A549 (cell line): ENCODE measurements at regions of chr12 and their contacts with region 1.

Region 1: DNA sequence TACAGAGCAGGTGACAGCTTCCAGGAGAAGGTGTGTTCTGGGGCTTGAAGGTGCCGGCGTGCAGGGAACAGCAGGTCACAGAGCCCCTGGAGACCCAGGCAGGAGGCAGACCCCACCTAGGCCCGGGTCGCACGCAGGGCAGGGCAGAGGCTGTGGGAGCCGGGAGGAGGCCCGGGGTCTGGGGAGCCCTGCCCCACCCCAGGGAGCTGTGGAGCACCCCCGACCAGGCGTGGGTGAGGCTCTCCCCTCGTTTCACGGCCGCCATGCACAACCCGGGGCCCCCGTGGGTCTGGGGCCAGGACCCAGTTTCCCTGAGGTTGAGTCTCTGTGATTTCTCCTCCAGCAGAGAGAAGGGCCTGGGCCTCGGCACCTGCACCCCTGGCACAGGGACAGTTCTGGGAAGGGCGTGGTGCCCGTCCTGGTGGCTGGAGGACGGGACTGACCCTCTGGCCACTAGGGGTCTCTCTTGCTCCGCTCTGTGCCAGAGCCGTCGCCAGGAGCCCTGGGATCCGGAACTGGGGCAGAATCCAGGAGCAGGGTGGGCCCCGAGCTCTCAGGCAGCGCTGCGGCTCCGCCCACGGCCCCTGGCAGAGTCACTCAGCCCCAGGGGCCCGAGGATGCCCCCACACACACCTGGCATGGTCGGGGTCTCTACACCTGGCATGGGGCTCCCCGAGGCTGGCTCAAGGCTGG is 75.2 kb upstream of the FBRSL1 start:
- DNase-seq: peak; percentile 80 to 88
- ATAC-seq: peak; percentile 87 to 98
- H3K4me3 ChIP-seq: no peak overlapping the region
- H3K27ac ChIP-seq: peak overlapping the region; percentile 65 to 85; a peak in 5 of 6 replicates
- H3K4me1 ChIP-seq: peaks cover 12% of the 10 kb centered on the region; the same call in 2 of the 3 replicates
- CTCF ChIP-seq: peak; percentile 94
- EP300 ChIP-seq: no peak
- POLR2A ChIP-seq: no peak
- RAD21 ChIP-seq: peak; percentile 98 to 99

Region 2: DNA sequence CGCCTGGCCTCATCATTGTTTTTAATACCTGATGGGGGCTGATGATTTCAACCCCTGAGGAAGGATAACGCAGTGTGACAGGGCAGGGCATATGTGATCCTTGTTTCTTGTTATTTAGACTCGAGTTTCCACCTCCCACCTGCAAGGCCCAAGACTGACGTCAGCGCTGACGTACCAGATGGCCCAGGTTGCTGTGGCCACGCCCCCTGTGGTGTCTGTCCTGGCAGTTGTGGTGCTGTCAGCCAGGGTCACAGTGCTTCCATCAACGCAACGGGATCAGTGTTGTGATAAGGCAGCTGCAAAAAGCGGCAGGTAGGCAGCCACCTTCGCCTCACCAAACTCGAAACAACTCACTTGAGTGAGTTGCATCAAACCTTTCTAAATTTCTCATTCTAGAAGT is 289.0 kb before region 1 on chr12:
- CTCF ChIA-PET with region 1: interaction called, 11 read pairs
- POLR2A ChIA-PET with region 1: no interaction called
- DNase-seq: no peak
- ATAC-seq: no peak
- H3K4me3 ChIP-seq: no peak overlapping the region
- H3K27ac ChIP-seq: no peak overlapping the region
- H3K4me1 ChIP-seq: no peaks in the 10 kb centered on the region
- CTCF ChIP-seq: no peak
- EP300 ChIP-seq: no peak
- POLR2A ChIP-seq: no peak
- RAD21 ChIP-seq: no peak

Region 3: GRCh38 chr12:132178801-132179401 is 235.9 kb before region 1 on chr12:
- CTCF ChIA-PET with region 1: interaction called, 18 read pairs
- POLR2A ChIA-PET with region 1: no interaction called
- DNase-seq: peak in 1 of 2 experiments; percentile 58
- ATAC-seq: peak; percentile 27 to 61; a peak in 4 of 6 replicates
- H3K4me3 ChIP-seq: peak overlapping the region; percentile 22
- H3K27ac ChIP-seq: peak overlapping the region in 1 of 2 experiments; percentile 30; a peak in 3 of 6 replicates
- H3K4me1 ChIP-seq: peaks cover 9% of the 10 kb centered on the region; the same call in 2 of the 3 replicates
- CTCF ChIP-seq: no peak
- EP300 ChIP-seq: no peak
- POLR2A ChIP-seq: no peak
- RAD21 ChIP-seq: no peak

Region 4: GRCh38 chr12:132213359-132214160 is 201.2 kb before region 1 on chr12:
- CTCF ChIA-PET with region 1: no interaction called
- POLR2A ChIA-PET with region 1: no interaction called
- DNase-seq: no peak
- ATAC-seq: no peak
- H3K4me3 ChIP-seq: no peak overlapping the region
- H3K27ac ChIP-seq: no peak overlapping the region
- H3K4me1 ChIP-seq: no peaks in the 10 kb centered on the region
- CTCF ChIP-seq: no peak
- EP300 ChIP-seq: no peak
- POLR2A ChIP-seq: no peak
- RAD21 ChIP-seq: no peak

Region 5: GRCh38 chr12:132268674-132269073 is 146.1 kb before region 1 on chr12:
- CTCF ChIA-PET with region 1: no interaction called
- POLR2A ChIA-PET with region 1: no interaction called
- DNase-seq: no peak
- ATAC-seq: no peak
- H3K4me3 ChIP-seq: no peak overlapping the region
- H3K27ac ChIP-seq: no peak overlapping the region
- H3K4me1 ChIP-seq: no peaks in the 10 kb centered on the region
- CTCF ChIP-seq: no peak
- EP300 ChIP-seq: no peak
- POLR2A ChIP-seq: no peak
- RAD21 ChIP-seq: no peak

Region 6: GRCh38 chr12:132327351-132328171 is 87.2 kb before region 1 on chr12:
- CTCF ChIA-PET with region 1: interaction called, 17 read pairs
- POLR2A ChIA-PET with region 1: no interaction called
- DNase-seq: peak; percentile 42 to 48
- ATAC-seq: peak; percentile 70 to 76
- H3K4me3 ChIP-seq: peak overlapping the region; percentile 17; the same call in 2 of the 3 replicates
- H3K27ac ChIP-seq: peak overlapping the region; percentile 45 to 68; a peak in 4 of 6 replicates
- H3K4me1 ChIP-seq: peaks cover 32% of the 10 kb centered on the region
- CTCF ChIP-seq: no peak
- EP300 ChIP-seq: no peak
- POLR2A ChIP-seq: no peak
- RAD21 ChIP-seq: no peak

Region 7: DNA sequence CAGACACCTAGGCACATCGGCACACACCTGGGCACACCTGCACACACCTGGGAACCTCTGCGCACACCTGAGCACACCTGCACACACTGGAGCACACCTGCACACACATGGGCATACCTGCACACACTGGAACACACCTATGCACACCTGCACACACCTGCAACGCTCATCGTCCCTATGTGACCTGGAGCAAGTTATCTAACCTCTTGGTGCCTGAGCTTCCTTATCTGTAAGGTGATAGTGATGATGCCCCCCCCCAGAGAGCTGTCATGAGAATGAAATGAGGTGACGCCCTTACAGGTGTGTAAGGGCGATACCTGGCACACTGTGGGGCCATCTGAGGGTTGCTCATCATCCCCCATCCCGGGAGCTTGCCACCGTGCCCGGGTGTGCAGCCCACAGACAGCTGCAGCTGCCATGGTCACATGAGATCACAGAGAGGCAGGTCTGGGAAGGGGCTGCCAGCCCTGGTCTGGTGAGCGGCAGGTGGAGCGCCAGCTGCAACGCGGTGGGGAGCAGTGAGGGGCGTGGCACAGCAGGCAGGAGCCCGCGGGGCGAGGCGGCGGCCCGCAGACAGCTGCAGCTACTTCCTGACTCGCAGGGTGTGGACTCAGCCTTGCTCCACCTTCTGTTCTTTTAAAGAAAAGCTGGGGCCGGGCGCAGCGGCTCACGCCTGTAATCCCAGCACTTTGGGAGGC is 15.3 kb after region 1 on chr12:
- CTCF ChIA-PET with region 1: interaction called, 70 read pairs
- POLR2A ChIA-PET with region 1: no interaction called
- DNase-seq: peak; percentile 45 to 57
- ATAC-seq: peak; percentile 36 to 76; a peak in 4 of 6 replicates
- H3K4me3 ChIP-seq: 0 out of 3 replicates have a peak overlapping the region, but pooled peaks have one; percentile 18
- H3K27ac ChIP-seq: peak overlapping the region; percentile 30 to 58; a peak in 3 of 6 replicates
- H3K4me1 ChIP-seq: peaks cover 21% of the 10 kb centered on the region; the same call in 2 of the 3 replicates
- CTCF ChIP-seq: no peak
- EP300 ChIP-seq: no peak
- POLR2A ChIP-seq: no peak
- RAD21 ChIP-seq: no peak

Region 8: DNA sequence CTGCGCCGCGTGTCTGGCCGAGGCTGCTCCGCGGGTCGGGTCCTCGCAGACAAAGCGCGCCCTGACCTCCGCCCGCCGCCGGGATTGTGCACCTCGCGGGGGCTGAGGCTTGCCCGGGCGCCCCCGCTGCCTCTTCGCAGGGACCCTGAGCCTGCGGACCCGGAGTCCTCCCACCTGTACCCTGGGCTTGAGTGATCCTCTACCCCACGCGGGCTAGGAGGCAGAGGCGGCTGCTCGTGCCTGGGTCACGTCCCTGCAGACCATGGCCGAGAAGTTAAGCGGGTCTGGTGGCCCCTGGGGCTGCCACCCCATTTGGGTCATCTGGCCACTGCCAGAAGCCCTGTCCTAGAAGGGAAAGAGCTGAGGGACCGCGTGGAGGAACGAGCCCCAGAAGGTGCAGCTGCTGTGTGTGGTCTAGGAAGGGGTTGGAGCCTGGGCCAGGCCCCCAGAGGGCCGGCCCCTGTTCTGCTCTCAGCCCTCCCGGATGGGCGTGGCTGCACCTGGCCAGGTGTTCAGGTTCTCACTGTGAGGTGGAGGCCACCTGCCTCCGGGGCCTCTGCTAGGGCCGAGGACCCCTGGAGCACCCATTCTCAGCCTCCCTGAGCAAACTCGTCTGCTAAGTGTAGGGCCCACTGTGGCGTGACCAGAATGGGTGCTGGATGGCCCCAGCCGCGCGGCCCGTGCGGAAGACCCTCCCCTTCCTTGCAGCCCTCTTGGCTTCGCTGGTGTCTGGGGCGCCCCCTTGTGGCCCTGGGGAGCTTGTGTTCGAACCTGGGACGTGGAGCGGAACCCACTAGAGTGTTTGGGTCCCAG is 146.0 kb after region 1 on chr12:
- CTCF ChIA-PET with region 1: interaction called, 108 read pairs
- POLR2A ChIA-PET with region 1: no interaction called
- DNase-seq: peak; percentile 82 to 89
- ATAC-seq: peak; percentile 54 to 83
- H3K4me3 ChIP-seq: peak overlapping the region; percentile 91
- H3K27ac ChIP-seq: peak overlapping the region; percentile 80 to 91; a peak in 5 of 6 replicates
- H3K4me1 ChIP-seq: peaks cover 10% of the 10 kb centered on the region; the same call in 2 of the 3 replicates
- CTCF ChIP-seq: peak; percentile 79
- EP300 ChIP-seq: no peak
- POLR2A ChIP-seq: no peak
- RAD21 ChIP-seq: peak; percentile 57 to 61

Region 9: GRCh38 chr12:132600048-132601032 is 185.6 kb after region 1 on chr12:
- CTCF ChIA-PET with region 1: interaction called, 17 read pairs
- POLR2A ChIA-PET with region 1: no interaction called
- DNase-seq: peak; percentile 76 to 78
- ATAC-seq: peak; percentile 84 to 91
- H3K4me3 ChIP-seq: peak overlapping the region; percentile 36
- H3K27ac ChIP-seq: peak overlapping the region; percentile 38 to 78; a peak in 5 of 6 replicates
- H3K4me1 ChIP-seq: peaks cover 11% of the 10 kb centered on the region; the same call in 1 of the 3 replicates
- CTCF ChIP-seq: peak; percentile 74
- EP300 ChIP-seq: no peak
- POLR2A ChIP-seq: no peak
- RAD21 ChIP-seq: peak; percentile 72 to 75